ENCODE measurements at regions of chr12 and their contacts with region 1.

Region 1: DNA sequence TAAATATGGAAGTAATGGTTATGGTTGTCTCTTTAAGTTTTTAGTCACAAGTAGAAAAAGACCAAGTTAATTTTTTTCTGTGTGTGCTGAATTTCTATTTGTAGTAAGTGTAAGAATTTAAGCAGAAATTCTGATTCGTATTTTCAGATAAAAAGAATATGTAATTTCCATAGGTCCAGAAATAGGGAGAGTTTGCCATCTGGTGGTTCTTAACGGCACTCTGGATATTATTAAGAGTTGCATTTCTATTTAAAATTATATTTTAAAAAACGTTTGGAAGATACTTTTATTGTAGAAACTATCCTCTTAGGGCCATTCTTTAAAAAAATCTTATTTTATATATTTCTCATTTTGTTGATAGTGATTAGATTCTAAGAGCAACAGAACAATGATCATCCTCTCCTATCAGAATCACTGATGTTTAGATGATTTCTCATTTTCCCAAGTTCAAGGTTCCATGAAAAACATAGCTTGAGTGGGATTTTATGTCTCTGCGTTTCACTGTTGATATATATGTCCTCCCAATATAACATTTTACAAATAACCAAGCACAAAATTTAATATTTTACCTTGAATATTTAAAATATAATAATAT is 88.3 kb downstream of the LRRK2 start:
- DNase-seq: no peak
- ATAC-seq: no peak
- H3K4me3 Mint-ChIP-seq: no peak overlapping the region
- H3K27ac Mint-ChIP-seq: peak overlapping the region; percentile 69
- H3K4me1 Mint-ChIP-seq: peaks cover 35% of the 10 kb centered on the region
- H3K27me3 Mint-ChIP-seq: no peaks in the 10 kb centered on the region
- CTCF ChIP-seq: peak; percentile 60

Region 2: DNA sequence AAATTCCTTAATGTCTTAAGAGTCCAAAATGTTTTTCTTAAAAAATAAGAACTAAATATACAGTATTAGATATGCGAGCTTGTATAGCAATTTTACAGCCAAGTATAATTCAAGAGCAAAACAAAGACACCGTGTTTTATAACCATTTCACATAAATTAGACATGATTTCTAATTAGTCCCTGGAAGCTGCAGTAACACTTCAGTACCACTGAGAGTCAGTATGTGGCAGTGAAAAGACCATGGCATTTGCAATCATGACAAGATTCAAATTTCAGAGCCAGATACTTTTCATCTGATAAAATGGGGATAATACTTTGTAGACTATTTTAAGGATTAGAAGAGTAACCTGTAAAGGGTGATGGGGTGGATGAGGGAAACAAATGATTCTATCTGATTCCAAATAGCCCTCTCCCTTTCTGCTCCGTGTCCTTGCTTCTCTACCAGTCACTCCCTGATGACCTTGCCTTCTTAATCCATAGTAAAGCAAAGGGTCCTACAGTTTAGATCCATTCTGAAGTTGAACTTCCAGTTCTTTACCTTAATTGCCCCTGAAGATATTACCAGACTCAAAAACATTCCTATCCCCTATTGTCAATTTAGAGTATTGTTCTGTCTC is 548.0 kb before region 1 on chr12:
- CTCF ChIA-PET with region 1: no interaction called
- POLR2A ChIA-PET with region 1: no interaction called
- intact Hi-C with region 1: loop called (anchors 5 kb)
- DNase-seq: no peak
- ATAC-seq: peak; percentile 45
- H3K4me3 Mint-ChIP-seq: no peak overlapping the region
- H3K27ac Mint-ChIP-seq: no peak overlapping the region
- H3K4me1 Mint-ChIP-seq: no peaks in the 10 kb centered on the region
- H3K27me3 Mint-ChIP-seq: no peaks in the 10 kb centered on the region
- CTCF ChIP-seq: peak; percentile 37

Region 3: DNA sequence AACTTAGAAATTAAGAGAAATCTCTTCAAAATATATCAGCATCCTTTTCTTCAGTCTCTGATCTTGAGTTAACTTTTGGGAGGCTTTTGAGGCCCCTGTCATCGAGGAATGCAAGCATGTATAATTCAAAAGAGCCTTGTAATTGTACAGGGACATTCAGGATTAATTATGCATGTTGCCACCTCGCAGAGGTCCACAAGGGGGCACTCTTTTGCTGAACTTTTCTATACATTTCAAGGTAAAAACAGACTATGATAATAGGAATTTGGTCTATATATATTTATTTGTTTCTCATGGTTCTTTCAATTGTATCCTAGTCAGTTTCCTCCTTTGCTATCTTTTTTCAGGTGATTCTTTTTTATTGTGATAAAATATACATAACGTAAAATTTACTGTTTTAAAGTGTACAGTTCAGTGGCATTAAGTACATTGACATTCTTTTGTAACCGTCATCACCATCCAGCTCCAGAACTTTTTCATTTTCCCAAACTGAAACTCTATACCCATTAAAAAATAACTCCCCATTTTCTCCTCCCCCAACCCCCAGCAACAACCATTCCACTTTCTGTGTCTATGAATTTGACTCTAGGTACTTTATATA is 160.2 kb before region 1 on chr12:
- CTCF ChIA-PET with region 1: interaction called, 54 read pairs
- POLR2A ChIA-PET with region 1: interaction called, 6 read pairs
- intact Hi-C with region 1: loop called (anchors 1 kb)
- DNase-seq: peak; percentile 33
- ATAC-seq: peak; percentile 56
- H3K4me3 Mint-ChIP-seq: no peak overlapping the region
- H3K27ac Mint-ChIP-seq: peak overlapping the region; percentile 3
- H3K4me1 Mint-ChIP-seq: peaks cover 52% of the 10 kb centered on the region
- H3K27me3 Mint-ChIP-seq: no peaks in the 10 kb centered on the region
- CTCF ChIP-seq: peak; percentile 58

Region 4: DNA sequence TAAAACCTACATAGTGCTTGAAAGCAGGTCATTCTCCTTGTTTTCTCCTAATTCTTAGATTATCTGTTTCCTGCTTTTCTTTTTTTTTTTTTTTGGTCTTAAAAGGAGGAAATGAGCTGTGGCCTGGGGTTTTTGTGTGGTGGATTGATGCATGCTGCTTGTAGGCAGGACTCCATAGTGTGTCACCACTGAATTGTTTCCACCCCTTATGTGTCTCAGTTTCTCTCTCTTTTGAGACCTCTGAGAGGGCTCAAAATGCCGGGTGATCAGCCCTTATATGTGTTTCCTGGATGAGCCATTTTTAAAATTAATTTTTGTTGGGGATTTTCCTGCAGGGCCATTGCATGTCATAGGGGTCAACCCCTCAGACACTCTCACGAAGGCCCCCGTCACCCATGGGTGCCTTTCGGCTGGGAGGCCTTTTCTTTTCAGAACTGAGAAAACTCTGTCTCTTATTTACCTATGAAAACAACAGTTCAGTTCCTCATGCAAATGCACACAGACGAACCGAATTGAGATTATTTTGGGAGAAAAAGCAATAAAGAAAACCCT is 120.3 kb before region 1 on chr12:
- CTCF ChIA-PET with region 1: interaction called, 5 read pairs
- POLR2A ChIA-PET with region 1: interaction called, 4 read pairs
- intact Hi-C with region 1: loop called (anchors 1 kb)
- DNase-seq: peak; percentile 50
- ATAC-seq: peak; percentile 96
- H3K4me3 Mint-ChIP-seq: peak overlapping the region; percentile 83
- H3K27ac Mint-ChIP-seq: peak overlapping the region; percentile 93
- H3K4me1 Mint-ChIP-seq: peaks cover 45% of the 10 kb centered on the region
- H3K27me3 Mint-ChIP-seq: no peaks in the 10 kb centered on the region
- CTCF ChIP-seq: no peak

Region 5: GRCh38 chr12:40325349-40325960 is 12.4 kb after region 1 on chr12:
- CTCF ChIA-PET with region 1: interaction called, 12 read pairs
- POLR2A ChIA-PET with region 1: interaction called, 4 read pairs
- intact Hi-C with region 1: no loop called
- DNase-seq: no peak
- ATAC-seq: peak; percentile 96
- H3K4me3 Mint-ChIP-seq: no peak overlapping the region
- H3K27ac Mint-ChIP-seq: no peak overlapping the region
- H3K4me1 Mint-ChIP-seq: peaks cover 13% of the 10 kb centered on the region
- H3K27me3 Mint-ChIP-seq: no peaks in the 10 kb centered on the region
- CTCF ChIP-seq: no peak

Region 6: DNA sequence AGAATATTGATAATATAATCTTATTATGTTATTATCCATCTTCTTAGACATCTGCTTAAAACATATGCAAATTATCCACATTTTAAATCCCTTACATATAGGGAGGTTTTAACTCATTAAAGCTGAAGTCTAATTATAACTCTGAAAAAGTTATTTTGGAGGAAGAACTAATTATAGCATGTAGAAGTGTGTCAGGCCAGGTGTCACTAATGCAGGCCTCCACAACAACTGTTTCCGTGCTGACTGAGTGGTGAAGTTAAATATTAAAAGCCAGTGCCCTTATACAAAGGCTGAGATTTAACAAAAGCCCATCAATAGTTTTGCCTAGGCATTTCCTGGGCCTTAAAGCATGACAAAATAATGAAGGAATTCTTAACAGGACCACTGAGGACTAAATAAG is 69.1 kb after region 1 on chr12:
- CTCF ChIA-PET with region 1: no interaction called
- POLR2A ChIA-PET with region 1: no interaction called
- intact Hi-C with region 1: no loop called
- DNase-seq: no peak
- ATAC-seq: no peak
- H3K4me3 Mint-ChIP-seq: no peak overlapping the region
- H3K27ac Mint-ChIP-seq: no peak overlapping the region
- H3K4me1 Mint-ChIP-seq: no peaks in the 10 kb centered on the region
- H3K27me3 Mint-ChIP-seq: no peaks in the 10 kb centered on the region
- CTCF ChIP-seq: no peak